ENCODE measurements at regions of chr20 and their contacts with region 1.

Region 1: GRCh38 chr20:41411391-41411847 is 44.8 kb upstream of the EMILIN3 start:
- DNase-seq: no peak
- ATAC-seq: no peak
- H3K4me3 Mint-ChIP-seq: no peak overlapping the region
- H3K27ac Mint-ChIP-seq: no peak overlapping the region
- H3K4me1 Mint-ChIP-seq: peaks cover 29% of the 10 kb centered on the region
- H3K27me3 Mint-ChIP-seq: no peaks in the 10 kb centered on the region

Region 2: GRCh38 chr20:41329435-41330342 is 81.7 kb before region 1 on chr20:
- CTCF ChIA-PET with region 1: no interaction called
- POLR2A ChIA-PET with region 1: no interaction called
- DNase-seq: peak; percentile 78
- ATAC-seq: peak; percentile 100
- H3K4me3 Mint-ChIP-seq: no peak overlapping the region
- H3K27ac Mint-ChIP-seq: peak overlapping the region; percentile 73
- H3K4me1 Mint-ChIP-seq: peaks cover 18% of the 10 kb centered on the region
- H3K27me3 Mint-ChIP-seq: peaks cover 4% of the 10 kb centered on the region

Region 3: GRCh38 chr20:41428285-41428684 is 16.9 kb after region 1 on chr20:
- CTCF ChIA-PET with region 1: interaction called, 25 read pairs
- POLR2A ChIA-PET with region 1: no interaction called
- DNase-seq: peak; percentile 49
- ATAC-seq: peak; percentile 88
- H3K4me3 Mint-ChIP-seq: no peak overlapping the region
- H3K27ac Mint-ChIP-seq: peak overlapping the region; percentile 79
- H3K4me1 Mint-ChIP-seq: peaks cover 33% of the 10 kb centered on the region
- H3K27me3 Mint-ChIP-seq: no peaks in the 10 kb centered on the region

Measured in activated CD8-positive, alpha-beta T cell treated with anti-CD3 and anti-CD28 coated beads, Interleukin-2, amount 10 ng/mL, durations not matched to agents 7 days and 5 days (primary cell).